ENCODE measurements at regions of chr16 and their contacts with region 1.

Region 1: GRCh38 chr16:29694384-29695195 is 15.6 kb downstream of the QPRT start:
- DNase-seq: no peak
- H3K4me3 ChIP-seq: no peak overlapping the region
- H3K27ac ChIP-seq: no peak overlapping the region
- H3K4me1 ChIP-seq: no peaks in the 10 kb centered on the region
- H3K27me3 ChIP-seq: no peaks in the 10 kb centered on the region
- CTCF ChIP-seq: no peak
- POLR2A ChIP-seq: no peak

Region 2: DNA sequence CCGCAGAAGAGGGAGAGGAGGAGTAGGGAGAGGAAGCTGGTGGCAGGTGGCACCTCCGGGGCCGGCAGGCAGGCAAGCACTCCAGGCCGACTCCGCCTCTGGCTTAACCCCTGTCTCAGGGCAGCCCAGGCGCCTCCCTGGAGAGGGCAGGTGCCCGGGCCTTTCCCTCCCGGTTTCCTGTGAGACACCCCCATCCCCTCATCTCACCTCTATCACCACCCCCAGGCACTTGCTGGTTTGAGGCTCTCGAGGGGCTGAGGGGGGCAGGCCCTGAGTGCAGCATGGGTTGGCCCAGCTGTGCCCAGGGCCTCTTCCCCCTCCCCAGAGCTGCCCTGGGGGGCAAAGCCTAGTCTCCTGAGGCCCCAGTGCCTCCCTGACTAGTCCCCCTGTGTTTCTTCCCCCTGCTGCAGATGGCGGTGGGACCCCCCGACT is 310.2 kb after region 1 on chr16:
- intact Hi-C with region 1: loop called (anchors 5 kb)
- DNase-seq: no peak
- H3K4me3 ChIP-seq: no peak overlapping the region
- H3K27ac ChIP-seq: no peak overlapping the region
- H3K4me1 ChIP-seq: no peaks in the 10 kb centered on the region
- H3K27me3 ChIP-seq: peaks cover under 1% of the 10 kb centered on the region
- CTCF ChIP-seq: no peak
- POLR2A ChIP-seq: no peak